ENCODE measurements at regions of chr9 and their contacts with region 1.

Region 1: GRCh38 chr9:36407122-36407723 is 7.2 kb upstream of the RNF38 start:
- DNase-seq: peak; percentile 10
- H3K4me3 Mint-ChIP-seq: no peak overlapping the region
- H3K27ac Mint-ChIP-seq: no peak overlapping the region
- H3K4me1 Mint-ChIP-seq: no peaks in the 10 kb centered on the region
- H3K27me3 Mint-ChIP-seq: no peaks in the 10 kb centered on the region
- CTCF ChIP-seq: no peak

Region 2: GRCh38 chr9:36450110-36450732 is 43.0 kb after region 1 on chr9:
- CTCF ChIA-PET with region 1: interaction called, 12 read pairs
- intact Hi-C with region 1: loop called (anchors 1 kb)
- DNase-seq: peak; percentile 2
- H3K4me3 Mint-ChIP-seq: no peak overlapping the region
- H3K27ac Mint-ChIP-seq: no peak overlapping the region
- H3K4me1 Mint-ChIP-seq: no peaks in the 10 kb centered on the region
- H3K27me3 Mint-ChIP-seq: no peaks in the 10 kb centered on the region
- CTCF ChIP-seq: no peak

Region 3: GRCh38 chr9:36551129-36551528 is 143.9 kb after region 1 on chr9:
- CTCF ChIA-PET with region 1: interaction called, 4 read pairs
- intact Hi-C with region 1: loop called (anchors 1 kb)
- DNase-seq: no peak
- H3K4me3 Mint-ChIP-seq: no peak overlapping the region
- H3K27ac Mint-ChIP-seq: no peak overlapping the region
- H3K4me1 Mint-ChIP-seq: no peaks in the 10 kb centered on the region
- H3K27me3 Mint-ChIP-seq: no peaks in the 10 kb centered on the region
- CTCF ChIP-seq: no peak